Mammary epithelial cell (primary cell): ENCODE measurements at regions of chr19 and their contacts with region 1.

Region 1: GRCh38 chr19:6092329-6093286 is 17.7 kb downstream of the RFX2 start:
- DNase-seq: peak; percentile 97
- H3K4me3 ChIP-seq: peak overlapping the region; percentile 30 to 50 (median 45)
- H3K27ac ChIP-seq: peak overlapping the region; percentile 99
- H3K4me1 ChIP-seq: peaks cover 42% of the 10 kb centered on the region
- H3K27me3 ChIP-seq: no peaks in the 10 kb centered on the region
- CTCF ChIP-seq: peak in 1 of 2 donors; percentile 32

Region 2: GRCh38 chr19:5719961-5720790 is 372.4 kb before region 1 on chr19 and contains the starts of genes CATSPERD and LONP1:
- CTCF ChIA-PET with region 1: no interaction called
- dilution Hi-C with region 1: no loop called
- in situ Hi-C with region 1: no loop called
- intact Hi-C with region 1: no loop called
- DNase-seq: peak; percentile 98
- H3K4me3 ChIP-seq: peak within 1 kb of the TSS; percentile 46 to 94 (median 66)
- H3K27ac ChIP-seq: peak within 1 kb of the TSS; percentile 91
- H3K4me1 ChIP-seq: peaks cover 14% of the 10 kb centered on the region
- H3K27me3 ChIP-seq: no peaks in the 10 kb centered on the region
- CTCF ChIP-seq: peak; percentile 81 to 93
- total RNA-seq, gene CATSPERD: not detected
- total RNA-seq, gene LONP1: 73.7 to 88.3 TPM

Region 3: GRCh38 chr19:6103217-6103644 is 10.6 kb after region 1 on chr19:
- CTCF ChIA-PET with region 1: interaction called, 3 read pairs
- dilution Hi-C with region 1: no loop called
- in situ Hi-C with region 1: no loop called
- intact Hi-C with region 1: loop called (anchors 1 kb)
- DNase-seq: peak; percentile 99
- H3K4me3 ChIP-seq: peak overlapping the region in 1 of 3 experiments; percentile 12
- H3K27ac ChIP-seq: peak overlapping the region; percentile 99
- H3K4me1 ChIP-seq: peaks cover 40% of the 10 kb centered on the region
- H3K27me3 ChIP-seq: no peaks in the 10 kb centered on the region
- CTCF ChIP-seq: no peak